MCF 10A (cell line): ENCODE measurements at regions of chr5 and their contacts with region 1.

Region 1: GRCh38 chr5:34929150-34929719 is at the start of gene DNAJC21:
- DNase-seq: peak; percentile 98
- H3K4me3 Mint-ChIP-seq: peak within 1 kb of the TSS; percentile 99
- H3K27ac Mint-ChIP-seq: peak within 1 kb of the TSS; percentile 98
- H3K4me1 Mint-ChIP-seq: peaks cover 14% of the 10 kb centered on the region
- H3K27me3 Mint-ChIP-seq: no peaks in the 10 kb centered on the region
- CTCF ChIP-seq: no peak
- total RNA-seq, gene DNAJC21: 62.3 and 64.6 TPM in 2 replicates

Region 2: DNA sequence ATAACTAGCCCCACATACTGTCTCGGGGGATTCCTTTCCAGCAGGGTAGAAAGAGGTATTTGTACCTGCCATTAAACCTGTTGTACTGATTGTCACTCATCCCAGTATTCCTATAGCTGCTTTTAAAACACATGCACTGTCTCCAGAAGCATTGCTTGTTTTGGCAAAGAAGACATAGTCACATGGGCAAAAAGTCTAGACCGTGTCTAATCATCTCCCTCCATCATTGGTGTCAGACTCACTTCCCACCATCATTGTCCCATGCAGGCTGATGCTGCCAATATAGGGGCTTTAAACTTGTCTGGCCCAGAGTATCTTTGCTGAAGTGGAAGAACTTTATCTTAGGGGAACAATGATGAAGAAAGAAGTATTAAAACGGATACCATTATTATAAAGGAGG is 12.7 kb after region 1 on chr5:
- CTCF ChIA-PET with region 1: no interaction called
- POLR2A ChIA-PET with region 1: interaction called, 17 read pairs
- intact Hi-C with region 1: no loop called
- DNase-seq: no peak
- H3K4me3 Mint-ChIP-seq: no peak overlapping the region
- H3K27ac Mint-ChIP-seq: peak overlapping the region; percentile 4
- H3K4me1 Mint-ChIP-seq: no peaks in the 10 kb centered on the region
- H3K27me3 Mint-ChIP-seq: no peaks in the 10 kb centered on the region
- CTCF ChIP-seq: no peak

Region 3: DNA sequence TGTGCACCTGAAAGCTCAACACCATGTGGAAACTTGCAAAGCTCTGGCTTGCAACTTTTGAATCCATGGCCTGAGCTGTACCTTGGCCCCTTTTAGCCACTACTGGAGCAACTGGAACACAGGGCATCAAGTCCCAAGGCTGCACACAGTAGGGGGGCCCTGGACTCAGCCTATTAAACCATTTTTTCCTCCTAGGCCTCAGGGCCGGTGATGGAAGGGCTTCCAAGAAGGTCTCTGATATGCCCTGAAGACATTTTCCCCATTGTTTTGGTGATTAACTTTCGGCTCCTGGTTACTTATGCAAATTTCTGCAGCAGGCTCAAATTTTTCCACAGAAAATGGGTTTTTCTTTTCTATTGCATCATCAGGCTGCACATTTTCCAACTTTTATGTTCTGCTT is 323.7 kb after region 1 on chr5:
- CTCF ChIA-PET with region 1: no interaction called
- POLR2A ChIA-PET with region 1: no interaction called
- intact Hi-C with region 1: no loop called
- DNase-seq: no peak
- H3K4me3 Mint-ChIP-seq: no peak overlapping the region
- H3K27ac Mint-ChIP-seq: no peak overlapping the region
- H3K4me1 Mint-ChIP-seq: peaks cover 9% of the 10 kb centered on the region
- H3K27me3 Mint-ChIP-seq: no peaks in the 10 kb centered on the region
- CTCF ChIP-seq: no peak